ENCODE measurements at regions of chr1 and their contacts with region 1.

Region 1: DNA sequence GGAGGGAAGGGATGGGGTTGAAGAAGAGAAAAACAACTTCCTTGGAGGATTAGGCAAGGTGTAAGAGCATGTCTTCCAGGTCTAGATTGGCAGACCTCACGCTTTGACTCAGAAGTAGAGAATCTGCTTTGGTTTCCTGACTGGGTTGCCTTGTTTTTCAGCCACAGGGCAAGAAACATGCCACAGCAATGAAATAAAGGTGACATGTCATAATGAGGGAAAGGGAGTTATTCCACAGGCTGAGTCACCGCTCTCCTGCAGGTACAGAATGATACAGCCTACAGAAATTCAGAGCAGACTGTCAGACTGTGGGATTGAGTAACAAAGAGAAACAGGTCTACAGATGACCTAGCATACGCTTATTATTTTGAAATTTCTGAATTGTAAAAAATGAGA is 45.3 kb downstream of the IRF2BP2 start:
- DNase-seq: peak; percentile 100
- H3K4me3 Mint-ChIP-seq: no peak overlapping the region
- H3K27ac Mint-ChIP-seq: peak overlapping the region; percentile 80
- H3K4me1 Mint-ChIP-seq: peaks cover 25% of the 10 kb centered on the region
- H3K27me3 Mint-ChIP-seq: no peaks in the 10 kb centered on the region
- CTCF ChIP-seq: no peak

Region 2: GRCh38 chr1:234509452-234510328 is 55.0 kb before region 1 on chr1:
- CTCF ChIA-PET with region 1: interaction called, 5 read pairs
- POLR2A ChIA-PET with region 1: interaction called, 37 read pairs
- intact Hi-C with region 1: loop called (anchors 1 kb)
- DNase-seq: peak; percentile 84
- H3K4me3 Mint-ChIP-seq: peak overlapping the region; percentile 52
- H3K27ac Mint-ChIP-seq: peak overlapping the region; percentile 85
- H3K4me1 Mint-ChIP-seq: peaks cover 46% of the 10 kb centered on the region
- H3K27me3 Mint-ChIP-seq: no peaks in the 10 kb centered on the region
- CTCF ChIP-seq: no peak

Region 3: DNA sequence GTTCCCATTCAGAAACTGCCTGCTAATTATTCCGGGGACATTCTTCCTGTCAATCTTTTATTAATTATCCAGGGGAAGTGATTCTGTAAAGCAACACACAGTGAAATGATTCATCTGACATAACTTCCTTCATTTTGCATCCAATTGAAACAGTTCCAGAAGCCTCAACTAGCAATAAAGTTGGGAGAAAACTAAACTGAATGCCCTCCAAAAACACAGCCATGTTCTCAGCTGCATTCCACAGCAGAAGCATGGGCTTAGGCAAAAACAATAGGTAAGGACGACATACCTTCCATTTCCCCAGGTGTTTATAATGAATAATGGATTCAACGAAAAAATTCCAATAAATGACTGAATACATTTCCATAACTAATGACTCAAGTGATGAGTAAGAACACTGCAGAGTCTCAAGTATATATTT is 48.8 kb before region 1 on chr1:
- CTCF ChIA-PET with region 1: no interaction called
- POLR2A ChIA-PET with region 1: interaction called, 18 read pairs
- intact Hi-C with region 1: no loop called
- DNase-seq: peak; percentile 76
- H3K4me3 Mint-ChIP-seq: no peak overlapping the region
- H3K27ac Mint-ChIP-seq: peak overlapping the region; percentile 80
- H3K4me1 Mint-ChIP-seq: peaks cover 27% of the 10 kb centered on the region
- H3K27me3 Mint-ChIP-seq: no peaks in the 10 kb centered on the region
- CTCF ChIP-seq: no peak

Region 4: DNA sequence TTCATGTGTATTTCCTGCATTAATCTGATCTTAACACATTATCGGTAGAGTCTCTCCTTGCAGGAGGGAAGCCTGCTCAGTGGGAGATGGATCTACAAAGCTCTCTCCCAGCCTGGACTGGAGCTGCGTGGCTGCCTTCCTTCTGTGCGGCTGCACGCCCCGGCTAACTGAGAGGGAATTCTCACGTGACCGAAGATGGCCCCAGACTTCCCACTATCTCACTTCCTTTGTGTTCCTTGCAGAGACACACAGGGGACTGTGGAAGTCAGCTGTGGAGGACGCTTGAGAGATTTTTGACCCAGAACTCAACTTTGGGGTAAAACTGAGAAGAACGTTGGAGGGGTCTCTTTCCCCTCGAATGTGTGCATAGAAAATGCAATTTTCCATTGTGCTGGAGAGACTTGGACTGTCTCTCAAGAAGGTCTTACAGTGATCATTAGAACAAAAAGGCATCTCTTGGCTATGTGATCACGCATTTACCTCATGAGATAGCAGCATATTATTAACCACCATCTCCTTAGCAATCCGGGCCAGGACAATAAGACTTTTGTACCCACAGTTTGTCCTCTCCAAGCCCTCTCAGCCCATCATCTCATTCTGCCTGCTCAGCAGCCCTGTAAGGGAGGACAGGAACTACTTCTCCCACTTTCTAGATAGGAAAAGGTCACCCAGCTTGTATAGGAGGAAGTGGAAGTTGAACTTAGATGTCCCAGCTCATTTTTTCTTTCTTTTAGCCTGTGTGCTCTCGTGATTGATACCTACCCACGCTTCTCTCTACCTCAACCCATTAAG is 36.4 kb before region 1 on chr1:
- CTCF ChIA-PET with region 1: no interaction called
- POLR2A ChIA-PET with region 1: interaction called, 130 read pairs
- intact Hi-C with region 1: loop called (anchors 1 kb)
- DNase-seq: no peak
- H3K4me3 Mint-ChIP-seq: no peak overlapping the region
- H3K27ac Mint-ChIP-seq: no peak overlapping the region
- H3K4me1 Mint-ChIP-seq: peaks cover 28% of the 10 kb centered on the region
- H3K27me3 Mint-ChIP-seq: no peaks in the 10 kb centered on the region
- CTCF ChIP-seq: no peak

Region 5: GRCh38 chr1:234544087-234544579 is 20.5 kb before region 1 on chr1:
- CTCF ChIA-PET with region 1: interaction called, 5 read pairs
- POLR2A ChIA-PET with region 1: interaction called, 66 read pairs
- intact Hi-C with region 1: no loop called
- DNase-seq: peak; percentile 96
- H3K4me3 Mint-ChIP-seq: no peak overlapping the region
- H3K27ac Mint-ChIP-seq: peak overlapping the region; percentile 80
- H3K4me1 Mint-ChIP-seq: peaks cover 36% of the 10 kb centered on the region
- H3K27me3 Mint-ChIP-seq: no peaks in the 10 kb centered on the region
- CTCF ChIP-seq: no peak

Region 6: GRCh38 chr1:234589854-234590620 is 25.4 kb after region 1 on chr1:
- CTCF ChIA-PET with region 1: interaction called, 8 read pairs
- POLR2A ChIA-PET with region 1: interaction called, 16 read pairs
- intact Hi-C with region 1: no loop called
- DNase-seq: peak; percentile 72
- H3K4me3 Mint-ChIP-seq: no peak overlapping the region
- H3K27ac Mint-ChIP-seq: peak overlapping the region; percentile 47
- H3K4me1 Mint-ChIP-seq: peaks cover 27% of the 10 kb centered on the region
- H3K27me3 Mint-ChIP-seq: no peaks in the 10 kb centered on the region
- CTCF ChIP-seq: no peak

Region 7: DNA sequence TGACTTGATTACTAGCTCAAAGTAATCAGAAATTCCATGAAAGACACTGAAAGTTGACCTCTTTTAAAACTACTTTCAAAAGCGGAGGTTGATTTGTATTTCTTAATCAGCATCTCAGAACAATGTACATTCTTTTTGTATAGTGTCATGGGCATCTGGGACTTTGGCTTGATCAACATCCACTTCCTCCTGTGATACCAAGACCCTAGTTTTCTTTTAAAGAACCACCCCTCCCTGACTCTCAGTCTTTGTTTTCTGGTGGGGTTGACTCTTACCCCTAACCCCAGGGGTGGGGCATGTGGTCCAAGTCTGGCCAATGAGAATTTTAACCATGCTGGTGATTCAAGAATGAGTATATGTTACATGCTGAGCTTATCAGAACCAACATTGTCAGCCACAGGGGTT is 67.1 kb after region 1 on chr1:
- CTCF ChIA-PET with region 1: no interaction called
- POLR2A ChIA-PET with region 1: no interaction called
- intact Hi-C with region 1: no loop called
- DNase-seq: peak; percentile 75
- H3K4me3 Mint-ChIP-seq: no peak overlapping the region
- H3K27ac Mint-ChIP-seq: peak overlapping the region; percentile 78
- H3K4me1 Mint-ChIP-seq: peaks cover 27% of the 10 kb centered on the region
- H3K27me3 Mint-ChIP-seq: no peaks in the 10 kb centered on the region
- CTCF ChIP-seq: no peak